ENCODE measurements at regions of chr21 and their contacts with region 1.

Region 1: DNA sequence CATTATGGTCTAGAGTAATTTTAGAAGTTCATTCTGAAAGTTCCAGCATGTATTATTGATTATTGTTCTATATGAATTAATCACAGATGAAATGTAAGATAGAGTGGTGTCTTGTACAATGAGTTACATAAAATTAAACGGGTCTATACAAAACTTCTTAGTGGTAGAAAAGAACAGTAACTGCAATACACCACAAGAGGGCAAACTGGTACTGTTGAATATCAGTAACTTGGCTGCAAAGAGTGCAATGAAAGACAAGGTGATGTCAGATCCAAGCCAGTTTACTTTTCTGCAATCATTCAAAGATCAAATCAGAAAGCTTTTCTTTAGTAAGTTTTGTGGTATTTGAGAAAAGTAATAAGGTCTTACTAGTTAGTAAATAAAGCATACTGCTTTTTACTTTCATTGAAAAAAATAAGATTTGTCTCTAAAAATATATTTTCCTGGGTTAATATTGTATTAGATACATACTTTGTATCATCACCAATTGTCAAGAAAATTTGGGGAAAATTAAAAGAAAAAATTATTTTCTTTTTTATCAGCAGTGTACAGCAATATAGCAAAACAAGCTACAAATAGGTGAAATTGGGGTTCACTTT is 66.4 kb upstream of the BTG3 start:
- ATAC-seq: peak in 7 of 8 experiments; percentile 37 to 84 (median 62)
- H3K4me3 ChIP-seq: no peak overlapping the region
- H3K27ac ChIP-seq: no peak overlapping the region
- H3K4me1 ChIP-seq: no peaks in the 10 kb centered on the region

Region 2: GRCh38 chr21:17903029-17903806 is 224.1 kb after region 1 on chr21:
- in situ Hi-C with region 1: loop called in 5 of 9 experiments (anchors 10 to 25 kb)
- ATAC-seq: peak in 3 of 8 experiments; percentile 43 to 67 (median 49)
- H3K4me3 ChIP-seq: no peak overlapping the region
- H3K27ac ChIP-seq: no peak overlapping the region
- H3K4me1 ChIP-seq: no peaks in the 10 kb centered on the region

Region 3: DNA sequence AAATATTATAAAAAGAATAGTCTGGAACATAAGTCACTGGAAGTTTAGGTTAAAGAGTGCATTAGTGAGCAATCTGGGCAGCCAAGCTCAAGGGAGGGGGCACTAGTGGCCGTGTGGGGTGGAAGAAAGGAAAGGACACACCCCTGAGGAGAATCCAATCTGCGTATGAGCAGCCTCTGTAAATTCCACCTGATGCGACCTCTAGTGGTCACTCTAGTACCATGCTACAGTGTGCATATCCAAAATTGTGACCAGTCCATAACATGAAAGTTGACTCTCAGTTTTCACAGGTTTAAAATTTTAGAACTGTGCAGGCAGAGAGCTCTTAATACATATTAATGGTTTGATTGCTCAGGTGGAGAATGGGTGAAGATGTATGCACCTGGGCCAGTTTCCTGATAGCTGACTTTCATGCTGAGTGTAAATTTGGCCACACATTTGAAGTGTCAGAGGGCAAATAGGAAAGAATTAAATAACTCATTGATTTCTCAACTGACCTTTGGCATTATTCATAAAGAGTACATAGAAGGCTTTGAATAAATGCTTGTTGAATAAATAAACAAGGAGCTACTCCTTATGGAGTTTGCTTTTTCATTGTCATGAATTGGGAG is 246.0 kb after region 1 on chr21:
- in situ Hi-C with region 1: loop called in 3 of 9 experiments (anchors 25 kb)
- ATAC-seq: peak; percentile 68 to 96 (median 80)
- H3K4me3 ChIP-seq: no peak overlapping the region
- H3K27ac ChIP-seq: no peak overlapping the region
- H3K4me1 ChIP-seq: peaks cover 0 to 7% of the 10 kb centered on the region in 2 donors

Measured in motor neuron (in vitro differentiated cells).